B cell (primary cell): ENCODE measurements at regions of chr7 and their contacts with region 1.

Region 1: DNA sequence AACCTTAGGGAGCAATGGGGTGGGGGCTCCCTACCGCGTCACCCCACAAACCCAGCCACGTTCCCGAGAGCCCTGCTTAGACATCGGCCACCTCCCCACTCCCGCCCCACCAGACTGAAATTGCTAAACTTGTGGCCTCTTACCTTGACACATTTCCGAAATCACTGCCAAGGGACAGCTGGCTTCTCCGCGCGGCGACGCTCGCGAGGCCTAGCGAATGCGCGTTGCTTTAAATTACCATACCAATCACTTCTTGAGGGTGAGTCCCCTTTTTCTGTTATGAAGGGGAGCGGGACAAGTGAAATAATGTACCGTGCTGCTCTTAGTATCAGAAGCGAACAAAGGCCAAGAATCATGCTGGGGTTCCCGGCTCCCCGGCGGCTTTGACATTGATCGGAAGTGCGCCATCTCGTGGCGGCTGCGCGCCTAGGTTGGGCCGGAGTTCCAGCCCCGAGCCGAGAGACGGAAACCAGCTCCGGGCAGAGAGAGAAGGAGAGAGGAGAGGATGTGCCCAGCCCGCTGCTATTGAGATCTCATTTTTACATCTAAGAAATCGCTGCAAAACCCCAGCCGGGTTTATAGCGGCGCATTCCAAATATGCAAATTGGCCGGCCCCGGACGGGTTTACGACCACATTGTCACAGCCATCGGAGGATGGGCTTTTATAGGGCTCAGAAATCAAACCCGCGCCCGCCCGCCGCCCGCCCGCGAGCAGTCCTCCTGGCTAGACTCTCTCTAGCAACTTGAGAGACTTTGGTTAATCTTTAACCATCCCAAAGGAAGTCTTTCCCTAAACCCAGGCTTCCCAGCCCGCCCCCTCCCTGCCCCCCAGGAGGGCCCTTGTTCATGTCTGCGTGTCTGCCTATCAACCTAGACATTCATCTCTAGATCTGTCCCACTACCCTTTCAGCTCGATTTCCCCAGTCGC is 5.3 kb downstream of the HOXA11 start:
- DNase-seq: peak; percentile 74
- ATAC-seq: peak; percentile 58
- H3K4me3 ChIP-seq: peak overlapping the region in 1 of 5 experiments; percentile 34
- H3K4me3 Mint-ChIP-seq: peak overlapping the region; percentile 58
- H3K27ac ChIP-seq: no peak overlapping the region
- H3K27ac Mint-ChIP-seq: peak overlapping the region; percentile 87
- H3K4me1 ChIP-seq: peaks cover 26 to 39% of the 10 kb centered on the region in 2 donors
- H3K4me1 Mint-ChIP-seq: peaks cover 17% of the 10 kb centered on the region
- H3K27me3 ChIP-seq: peaks cover 0 to 94% (median 75%) of the 10 kb centered on the region in 4 experiments
- H3K27me3 Mint-ChIP-seq: peaks cover 64% of the 10 kb centered on the region
- CTCF ChIP-seq: peak; percentile 77

Region 2: GRCh38 chr7:26664735-26665408 is 514.9 kb before region 1 on chr7:
- CTCF ChIA-PET with region 1: no interaction called
- POLR2A ChIA-PET with region 1: no interaction called
- intact Hi-C with region 1: no loop called
- DNase-seq: peak; percentile 54
- ATAC-seq: peak; percentile 73
- H3K4me3 ChIP-seq: peak overlapping the region in 3 of 5 experiments; percentile 8 to 36 (median 21)
- H3K4me3 Mint-ChIP-seq: peak overlapping the region; percentile 64
- H3K27ac ChIP-seq: no peak overlapping the region
- H3K27ac Mint-ChIP-seq: no peak overlapping the region
- H3K4me1 ChIP-seq: peaks cover 0 to 6% of the 10 kb centered on the region in 2 donors
- H3K4me1 Mint-ChIP-seq: peaks cover 14% of the 10 kb centered on the region
- H3K27me3 ChIP-seq: no peaks in the 10 kb centered on the region
- H3K27me3 Mint-ChIP-seq: no peaks in the 10 kb centered on the region
- CTCF ChIP-seq: no peak

Region 3: GRCh38 chr7:27204851-27205337 is 25.1 kb after region 1 on chr7:
- CTCF ChIA-PET with region 1: interaction called, 11 read pairs
- POLR2A ChIA-PET with region 1: no interaction called
- intact Hi-C with region 1: loop called (anchors 2 kb)
- DNase-seq: peak; percentile 39
- ATAC-seq: no peak
- H3K4me3 ChIP-seq: no peak overlapping the region
- H3K4me3 Mint-ChIP-seq: no peak overlapping the region
- H3K27ac ChIP-seq: no peak overlapping the region
- H3K27ac Mint-ChIP-seq: no peak overlapping the region
- H3K4me1 ChIP-seq: peaks cover 36 to 58% of the 10 kb centered on the region in 2 donors
- H3K4me1 Mint-ChIP-seq: peaks cover 33% of the 10 kb centered on the region
- H3K27me3 ChIP-seq: peaks cover 1 to 94% (median 90%) of the 10 kb centered on the region in 4 experiments
- H3K27me3 Mint-ChIP-seq: peaks cover 86% of the 10 kb centered on the region
- CTCF ChIP-seq: no peak